ENCODE measurements at regions of chr7 and their contacts with region 1.

Region 1: DNA sequence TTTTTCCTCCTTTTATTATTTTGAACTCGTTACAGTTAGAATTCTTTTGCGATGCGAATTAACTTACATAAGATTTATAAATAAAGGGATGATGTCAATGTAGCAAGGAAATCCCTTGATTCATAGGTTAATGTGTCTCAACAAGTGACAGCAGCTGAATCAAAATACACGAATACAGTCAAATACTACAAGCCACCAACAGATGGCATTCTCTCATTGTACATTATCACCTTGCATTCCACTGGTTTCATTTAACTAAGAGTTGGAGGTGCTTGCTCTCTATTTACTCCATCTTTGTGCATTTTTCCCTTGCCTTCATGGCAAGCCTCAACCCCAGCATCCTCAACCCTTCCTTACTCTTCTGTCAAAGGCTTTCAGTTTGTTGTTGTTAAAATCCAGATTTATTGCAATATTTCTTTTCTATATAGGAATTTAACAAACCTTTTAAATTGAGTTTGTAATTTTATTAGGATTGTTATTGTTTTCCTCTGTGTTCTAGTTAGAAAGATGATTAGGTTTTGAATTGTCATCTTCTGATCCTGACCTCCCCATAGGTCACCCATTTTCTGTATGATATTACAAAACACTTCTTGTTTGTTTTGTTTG is 78.3 kb downstream of the SLC25A40 start:
- DNase-seq: no peak
- ATAC-seq: no peak

Region 2: DNA sequence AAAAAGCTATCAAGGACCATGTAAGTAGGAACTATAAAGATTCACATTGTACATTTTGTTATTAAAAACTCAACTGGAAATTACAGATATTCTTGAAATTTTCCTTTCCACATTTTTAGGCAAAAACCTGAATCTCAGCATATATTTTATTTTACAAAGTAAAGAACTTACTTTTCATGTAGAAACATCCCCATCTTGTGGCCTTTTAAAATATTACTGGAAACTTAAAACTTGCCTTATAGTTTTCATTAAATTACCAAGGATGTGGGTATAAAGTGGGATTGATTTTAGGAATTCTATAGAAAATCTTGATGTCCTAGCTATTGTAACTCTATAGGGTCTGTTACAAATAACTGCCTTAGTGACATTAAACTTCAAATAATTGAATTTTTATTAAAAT is 89.0 kb after region 1 on chr7:
- intact Hi-C with region 1: loop called (anchors 5 kb)
- DNase-seq: no peak
- ATAC-seq: no peak

Region 3: DNA sequence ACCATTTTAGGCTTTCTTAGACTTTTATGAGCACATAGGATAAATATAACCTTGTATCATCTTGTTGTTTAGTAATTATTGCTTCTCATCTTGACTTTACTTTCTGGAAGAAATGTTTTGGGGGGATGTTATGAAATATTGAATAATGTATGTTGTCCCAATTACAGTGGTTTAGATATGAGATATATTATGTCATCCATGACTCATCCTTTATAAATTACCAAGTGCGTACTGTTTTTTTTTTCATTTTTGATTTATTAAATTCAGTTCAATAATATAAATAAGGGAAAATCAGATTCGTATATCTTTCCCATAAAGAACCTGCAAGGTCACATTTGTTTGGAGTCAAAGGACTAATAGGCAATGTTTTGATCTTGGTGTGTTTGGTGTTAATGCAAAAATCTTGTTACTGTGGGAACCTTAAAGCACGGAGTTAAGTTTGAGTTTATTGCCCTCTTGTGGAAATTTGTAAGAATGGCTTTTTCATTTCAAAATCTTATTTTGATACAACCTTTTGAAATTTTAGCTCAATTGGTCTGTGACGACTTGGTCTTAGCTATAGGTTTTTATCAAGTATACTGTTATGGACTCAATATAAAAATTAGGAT is 313.3 kb after region 1 on chr7:
- intact Hi-C with region 1: loop called (anchors 2 kb)
- DNase-seq: no peak
- ATAC-seq: no peak

Region 4: DNA sequence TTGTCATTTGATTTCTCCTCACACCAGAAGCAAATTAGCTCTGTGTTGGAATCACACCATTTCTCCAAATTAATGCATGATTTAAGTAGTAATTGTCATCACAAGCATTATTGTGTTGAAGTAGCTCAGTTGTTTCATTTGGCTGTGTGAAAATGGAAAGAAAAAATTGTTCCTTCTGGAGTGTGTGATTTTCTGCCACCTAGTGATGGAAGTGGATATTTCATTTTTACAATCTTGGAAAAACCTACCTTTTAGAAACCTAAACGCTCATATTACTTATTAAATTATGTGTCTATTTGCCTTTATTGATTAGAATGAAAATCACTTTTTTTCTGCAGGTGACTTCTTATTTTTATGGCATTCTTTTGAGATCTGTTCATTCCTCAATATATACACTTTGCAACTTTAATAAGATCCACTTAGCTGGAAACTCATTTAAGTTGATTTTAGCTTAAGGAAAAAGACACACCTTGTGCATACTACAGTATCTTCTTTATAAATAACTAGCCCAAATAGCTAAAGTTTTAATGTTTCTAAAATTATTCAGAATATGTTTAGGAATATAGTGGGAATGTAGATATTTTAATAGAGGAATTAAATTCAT is 371.9 kb after region 1 on chr7:
- intact Hi-C with region 1: loop called (anchors 5 kb)
- DNase-seq: no peak
- ATAC-seq: no peak